Breast epithelium (tissue), 4 donors: ENCODE measurements at regions of chr2 and their contacts with region 1.

Region 1: DNA sequence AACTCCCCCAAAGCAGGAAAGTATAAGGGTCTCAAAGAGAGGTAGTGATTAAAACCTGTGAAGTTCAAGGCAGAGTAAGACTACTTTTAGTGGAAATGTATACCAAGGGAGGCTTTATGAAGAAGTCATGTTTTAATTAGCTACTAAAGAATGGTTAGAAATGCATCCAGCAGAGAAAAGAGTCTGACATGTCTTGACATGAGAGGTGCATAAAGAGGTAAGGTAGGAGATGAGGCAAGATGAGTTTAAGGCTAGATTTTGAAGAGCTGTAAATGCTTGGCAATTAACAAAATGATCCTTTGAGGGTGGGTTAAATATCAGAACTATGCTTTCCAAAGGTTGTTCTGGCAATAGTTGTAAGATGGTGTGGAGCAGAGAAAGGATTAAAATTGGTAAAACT is 88.7 kb upstream of the WDSUB1 start:
- DNase-seq: no peak
- H3K4me3 ChIP-seq: no peak overlapping the region
- H3K27ac ChIP-seq: no peak overlapping the region
- H3K4me1 ChIP-seq: no peaks in the 10 kb centered on the region
- H3K27me3 ChIP-seq: no peaks in the 10 kb centered on the region
- CTCF ChIP-seq: no peak
- POLR2A ChIP-seq: no peak

Region 2: DNA sequence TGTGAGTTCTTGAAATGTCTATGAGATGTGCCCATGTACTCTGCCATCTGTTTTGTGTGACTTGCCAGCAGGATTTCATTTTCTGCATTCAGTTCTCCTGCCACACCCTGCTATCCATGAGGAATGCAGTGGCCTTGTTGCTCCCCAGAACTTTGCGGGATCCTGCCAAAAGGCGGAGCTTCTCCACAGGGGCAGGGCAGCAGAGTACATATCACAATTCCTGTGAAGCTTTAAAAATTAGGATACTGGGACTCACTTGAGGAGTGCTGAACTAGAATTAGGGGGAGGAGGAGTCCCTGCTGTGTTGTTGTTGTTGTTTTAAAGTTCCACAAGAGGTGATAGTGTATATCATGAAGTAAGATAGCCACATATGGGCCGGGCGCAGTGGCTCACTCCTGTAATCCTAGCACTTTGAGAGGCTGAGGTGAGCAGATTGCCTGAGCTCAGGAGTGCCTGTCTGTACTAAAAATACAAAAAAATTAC is 330.4 kb before region 1 on chr2:
- intact Hi-C with region 1: no loop called
- DNase-seq: peak in 1 of 2 donors; percentile 74
- H3K4me3 ChIP-seq: no peak overlapping the region
- H3K27ac ChIP-seq: peak overlapping the region; percentile 74 to 79
- H3K4me1 ChIP-seq: peaks cover 0 to 6% of the 10 kb centered on the region in 2 donors
- H3K27me3 ChIP-seq: no peaks in the 10 kb centered on the region
- CTCF ChIP-seq: no peak
- POLR2A ChIP-seq: no peak

Region 3: GRCh38 chr2:159326569-159327255 is 48.5 kb before region 1 on chr2:
- intact Hi-C with region 1: loop called (anchors 2 kb)
- DNase-seq: no peak
- H3K4me3 ChIP-seq: no peak overlapping the region
- H3K27ac ChIP-seq: no peak overlapping the region
- H3K4me1 ChIP-seq: no peaks in the 10 kb centered on the region
- H3K27me3 ChIP-seq: no peaks in the 10 kb centered on the region
- CTCF ChIP-seq: no peak
- POLR2A ChIP-seq: no peak